ENCODE measurements at regions of chr5 and their contacts with region 1.

Region 1: DNA sequence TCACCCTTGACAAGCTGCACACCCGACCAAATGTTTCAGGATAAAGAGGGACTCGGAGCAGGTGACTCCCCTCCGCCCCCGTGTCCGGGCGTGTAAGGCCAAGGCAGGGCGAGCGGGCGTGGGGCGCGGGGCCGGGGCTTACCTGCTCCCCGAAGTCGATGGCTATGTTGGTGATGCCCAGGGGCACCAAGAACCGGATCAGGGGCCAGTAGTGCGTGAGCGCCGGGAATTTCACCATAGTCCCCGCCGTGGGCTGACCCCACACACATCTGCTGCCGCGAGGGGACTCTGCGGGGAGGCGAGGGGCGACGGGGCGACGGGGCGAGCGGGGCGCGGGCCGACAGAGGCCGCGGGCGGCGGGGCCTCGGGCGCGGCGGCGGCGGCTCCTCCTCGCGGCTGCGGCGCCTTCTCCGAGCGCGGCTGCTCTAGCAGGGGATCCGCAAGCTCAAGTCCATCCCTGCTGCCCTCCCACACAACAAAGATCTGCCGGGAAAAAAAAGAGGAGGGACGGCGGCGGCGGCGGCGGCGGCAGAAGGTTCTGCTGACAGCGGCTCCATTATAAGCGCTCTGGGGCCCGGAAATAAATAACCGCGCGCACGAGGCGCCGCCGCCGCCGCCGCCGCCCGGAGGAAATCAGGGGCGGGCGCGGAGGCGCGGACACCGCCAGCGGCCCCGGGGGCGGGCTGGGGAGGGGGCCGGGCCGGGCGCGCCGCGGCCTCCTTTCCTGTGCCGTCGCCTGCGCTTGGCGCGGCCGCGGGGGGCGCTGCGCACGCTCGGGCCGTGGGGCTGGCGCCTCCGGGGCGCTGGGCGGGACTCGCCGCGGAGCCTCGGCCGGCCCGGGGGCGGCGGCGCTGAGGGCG is at the start of gene ANKH:
- DNase-seq: peak; percentile 81
- H3K4me3 Mint-ChIP-seq: peak within 1 kb of the TSS; percentile 97
- H3K27ac Mint-ChIP-seq: peak within 1 kb of the TSS; percentile 94
- H3K4me1 Mint-ChIP-seq: peaks cover 24% of the 10 kb centered on the region
- H3K27me3 Mint-ChIP-seq: peaks cover 19% of the 10 kb centered on the region
- total RNA-seq, gene ANKH: 34.2 and 35.6 TPM in 2 replicates

Region 2: DNA sequence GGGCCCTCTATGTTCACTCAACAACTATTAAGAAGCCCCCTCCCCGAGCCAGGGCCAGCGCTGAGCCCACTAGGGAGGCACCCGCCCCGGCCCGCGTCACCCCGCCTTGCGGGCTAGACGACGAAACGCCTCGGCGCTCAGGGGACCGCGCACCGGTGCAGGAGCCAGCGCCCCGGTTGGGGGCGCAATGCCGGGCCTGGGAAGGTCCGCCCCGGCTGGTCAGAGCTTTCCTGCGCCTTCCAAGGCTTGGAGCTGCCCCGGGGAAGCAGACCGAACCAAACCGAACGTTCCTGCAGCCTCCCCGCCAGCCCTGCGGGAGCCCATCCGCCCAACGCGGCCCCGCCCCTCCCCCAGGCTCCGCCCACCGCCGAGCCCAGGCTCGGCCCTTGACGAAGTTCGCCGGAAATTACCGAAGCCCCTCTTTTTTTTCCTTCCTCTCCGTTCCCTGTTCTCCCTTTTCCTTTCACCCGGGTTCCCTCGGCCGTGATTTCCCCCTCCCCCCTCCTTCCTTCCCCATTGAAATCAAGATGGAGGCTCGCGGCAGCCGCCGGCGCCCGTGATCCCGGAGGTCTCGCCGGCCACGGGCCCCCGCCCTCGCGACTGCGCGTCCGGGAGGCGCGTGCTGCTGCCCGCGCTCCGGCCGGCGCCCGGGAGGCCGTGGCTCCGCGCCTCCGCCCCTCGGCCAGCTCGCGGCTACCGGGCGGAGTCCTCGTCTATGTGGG is 728.5 kb before region 1 on chr5 and contains the start of gene TRIO:
- intact Hi-C with region 1: loop called (anchors 10 kb)
- DNase-seq: peak; percentile 66
- H3K4me3 Mint-ChIP-seq: peak within 1 kb of the TSS; percentile 83
- H3K27ac Mint-ChIP-seq: peak within 1 kb of the TSS; percentile 72
- H3K4me1 Mint-ChIP-seq: peaks cover 14% of the 10 kb centered on the region
- H3K27me3 Mint-ChIP-seq: peaks cover 51% of the 10 kb centered on the region
- total RNA-seq, gene TRIO: 10.2 and 11.4 TPM in 2 replicates

Region 3: DNA sequence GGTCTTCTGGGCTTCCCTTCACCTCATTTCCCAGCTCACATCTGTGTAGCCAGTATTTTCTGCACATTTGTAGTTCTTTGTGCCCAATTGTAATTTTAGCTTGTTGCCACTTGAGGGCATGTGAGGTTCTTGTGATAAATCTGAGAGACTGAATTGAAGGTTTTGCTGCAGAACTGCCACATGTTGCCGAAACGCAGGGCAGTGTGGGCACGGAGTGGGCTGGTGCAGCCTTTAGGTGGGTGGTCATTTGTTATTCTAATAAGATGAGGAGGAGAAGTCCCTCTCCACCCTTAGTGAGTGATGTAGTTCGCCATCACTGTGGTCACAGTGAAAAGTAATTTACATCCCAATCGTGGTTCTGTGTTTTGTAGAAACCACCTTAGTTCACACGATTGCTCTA is 185.7 kb before region 1 on chr5:
- intact Hi-C with region 1: loop called (anchors 1 kb)
- DNase-seq: no peak
- H3K4me3 Mint-ChIP-seq: no peak overlapping the region
- H3K27ac Mint-ChIP-seq: peak overlapping the region; percentile 93
- H3K4me1 Mint-ChIP-seq: peaks cover 38% of the 10 kb centered on the region
- H3K27me3 Mint-ChIP-seq: no peaks in the 10 kb centered on the region

Region 4: GRCh38 chr5:14727428-14727865 is 144.0 kb before region 1 on chr5:
- intact Hi-C with region 1: loop called (anchors 1 kb)
- DNase-seq: peak; percentile 64
- H3K4me3 Mint-ChIP-seq: no peak overlapping the region
- H3K27ac Mint-ChIP-seq: no peak overlapping the region
- H3K4me1 Mint-ChIP-seq: peaks cover 11% of the 10 kb centered on the region
- H3K27me3 Mint-ChIP-seq: no peaks in the 10 kb centered on the region

Region 5: DNA sequence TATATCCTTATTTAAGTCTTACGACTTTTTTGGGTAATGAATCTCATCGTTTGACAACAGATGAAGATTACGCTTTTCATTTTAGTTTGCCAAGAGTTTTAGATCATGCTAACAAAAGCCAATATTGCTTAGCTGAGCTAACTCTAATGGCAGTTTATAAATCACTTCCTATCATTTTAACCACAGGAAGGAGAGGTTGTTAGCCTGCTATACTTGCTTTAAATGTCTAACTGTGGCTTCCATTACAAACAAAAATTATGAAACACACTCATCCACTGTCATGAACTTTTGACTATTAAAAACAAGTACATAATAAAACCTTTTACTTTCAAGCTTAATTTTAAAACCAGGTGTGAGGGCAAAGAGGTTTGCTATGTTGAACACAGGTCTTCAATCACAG is 53.9 kb after region 1 on chr5:
- intact Hi-C with region 1: loop called (anchors 1 kb)
- DNase-seq: no peak
- H3K4me3 Mint-ChIP-seq: peak overlapping the region; percentile 15
- H3K27ac Mint-ChIP-seq: peak overlapping the region; percentile 78
- H3K4me1 Mint-ChIP-seq: peaks cover 58% of the 10 kb centered on the region
- H3K27me3 Mint-ChIP-seq: peaks cover 2% of the 10 kb centered on the region

Region 6: GRCh38 chr5:15003511-15003920 is 132.1 kb after region 1 on chr5:
- intact Hi-C with region 1: loop called (anchors 1 kb)
- DNase-seq: peak; percentile 33
- H3K4me3 Mint-ChIP-seq: no peak overlapping the region
- H3K27ac Mint-ChIP-seq: no peak overlapping the region
- H3K4me1 Mint-ChIP-seq: peaks cover 20% of the 10 kb centered on the region
- H3K27me3 Mint-ChIP-seq: peaks cover 28% of the 10 kb centered on the region